G401 (cell line): ENCODE measurements at regions of chr10 and their contacts with region 1.

Region 1: DNA sequence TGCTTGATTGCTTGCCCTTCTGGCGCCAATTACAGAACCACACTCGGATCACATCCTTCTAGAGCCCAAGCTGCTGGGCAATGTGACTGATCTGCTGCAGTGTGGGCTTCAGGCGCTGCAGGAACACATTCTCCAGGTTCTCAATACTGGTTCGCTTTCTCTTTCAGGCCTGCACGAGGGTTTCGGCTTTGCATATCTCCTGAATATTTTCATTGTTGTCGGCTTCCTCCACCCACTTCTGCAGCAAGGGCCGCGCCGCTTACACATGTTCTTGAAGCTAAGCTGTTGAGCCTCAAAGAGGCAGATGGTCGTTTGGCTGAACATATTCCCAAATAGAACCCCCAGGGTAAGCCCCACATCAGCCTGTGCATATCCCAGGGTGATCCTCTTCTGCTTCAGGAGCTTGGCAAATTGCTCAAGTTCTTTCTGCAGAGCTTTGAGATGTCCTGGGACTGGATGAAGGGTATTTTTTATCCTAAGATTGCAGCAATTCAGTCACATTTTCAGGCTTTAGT is 64.6 kb downstream of the HERC4 start:
- DNase-seq: no peak

Region 2: GRCh38 chr10:67959839-67960476 is 50.5 kb before region 1 on chr10:
- in situ Hi-C with region 1: loop called (anchors 10 kb)
- DNase-seq: no peak